A549 (cell line): ENCODE measurements at regions of chr15 and their contacts with region 1.

Region 1: DNA sequence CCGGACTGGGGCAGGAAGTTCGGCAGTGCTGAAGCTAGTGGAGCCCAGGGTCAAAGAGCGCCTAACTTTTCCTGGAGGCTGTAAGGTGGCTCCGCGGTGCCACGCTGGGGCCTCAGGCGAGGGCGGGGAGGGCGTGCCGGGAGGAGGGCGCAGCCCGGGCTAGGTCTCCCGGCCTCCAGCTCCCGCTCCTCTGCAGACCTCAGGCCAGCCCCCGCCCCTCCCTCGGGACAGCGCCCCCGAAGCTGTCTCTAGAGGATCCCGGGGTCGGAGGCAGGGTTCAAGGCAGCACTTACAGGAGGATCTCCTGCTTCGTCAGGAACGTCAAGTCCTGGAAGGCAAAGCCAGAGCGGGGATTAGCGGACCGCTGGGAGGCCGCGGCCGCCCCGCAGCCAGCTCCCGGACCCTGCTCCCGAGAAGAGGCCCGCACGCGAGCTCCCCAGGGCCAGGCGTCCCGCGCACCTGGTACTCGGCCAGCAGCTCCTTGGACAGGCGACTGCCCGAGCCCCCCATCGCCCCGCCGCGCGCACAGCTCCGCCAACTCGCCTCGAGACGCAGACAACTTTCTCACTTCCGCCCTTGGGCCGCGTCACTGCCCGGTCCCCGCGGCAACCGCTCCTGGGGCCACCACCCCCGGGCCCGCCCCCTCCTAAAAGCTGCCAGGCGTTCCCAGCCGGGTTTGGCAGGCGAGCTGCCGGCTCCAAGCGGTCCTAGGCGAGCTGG is at the start of gene CIB1:
- DNase-seq: peak; percentile 85 to 97
- ATAC-seq: peak; percentile 84 to 92
- H3K4me3 ChIP-seq: peak within 1 kb of the TSS; percentile 85
- H3K27ac ChIP-seq: peak within 1 kb of the TSS; percentile 86 to 90
- H3K4me1 ChIP-seq: peaks cover 26% of the 10 kb centered on the region
- CTCF ChIP-seq: no peak; the same call in none of the 3 replicates
- EP300 ChIP-seq: no peak
- POLR2A ChIP-seq: peak; percentile 44
- RAD21 ChIP-seq: no peak; a peak in 1 of 5 replicates
- polyA plus RNA-seq, gene CIB1: 84.1 and 130 TPM in 2 replicates

Region 2: DNA sequence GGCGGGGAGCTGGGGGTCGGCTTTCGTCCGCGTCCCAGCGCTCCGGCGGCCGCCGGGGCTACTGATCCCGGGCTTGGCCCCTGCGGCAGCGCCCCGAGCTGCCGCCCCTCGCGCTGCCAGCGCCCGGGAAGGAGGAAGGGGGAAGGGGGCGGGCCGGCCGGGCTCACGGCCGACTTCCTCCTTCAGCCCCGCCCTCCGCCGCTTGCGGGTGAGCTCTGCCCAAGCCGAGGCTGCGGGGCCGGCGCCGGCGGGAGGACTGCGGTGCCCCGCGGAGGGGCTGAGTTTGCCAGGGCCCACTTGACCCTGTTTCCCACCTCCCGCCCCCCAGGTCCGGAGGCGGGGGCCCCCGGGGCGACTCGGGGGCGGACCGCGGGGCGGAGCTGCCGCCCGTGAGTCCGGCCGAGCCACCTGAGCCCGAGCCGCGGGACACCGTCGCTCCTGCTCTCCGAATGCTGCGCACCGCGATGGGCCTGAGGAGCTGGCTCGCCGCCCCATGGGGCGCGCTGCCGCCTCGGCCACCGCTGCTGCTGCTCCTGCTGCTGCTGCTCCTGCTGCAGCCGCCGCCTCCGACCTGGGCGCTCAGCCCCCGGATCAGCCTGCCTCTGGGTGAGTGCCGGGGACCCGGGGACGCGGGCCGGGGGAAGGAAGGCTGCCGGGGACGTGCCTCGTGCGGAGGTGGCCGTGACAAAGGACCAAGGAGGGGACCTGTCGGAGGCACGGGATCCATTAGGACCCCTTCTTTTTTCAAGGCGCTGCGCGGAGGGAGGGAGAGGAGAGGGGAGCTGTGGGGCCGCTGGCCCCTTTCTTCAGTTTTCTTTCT is 32.2 kb before region 1 on chr15 and contains the start of gene SEMA4B:
- CTCF ChIA-PET with region 1: interaction called, 288 read pairs
- POLR2A ChIA-PET with region 1: interaction called, 12 read pairs
- DNase-seq: peak; percentile 61 to 92
- ATAC-seq: peak; percentile 88
- H3K4me3 ChIP-seq: peak within 1 kb of the TSS; percentile 80
- H3K27ac ChIP-seq: peak within 1 kb of the TSS; percentile 90 to 98
- H3K4me1 ChIP-seq: peaks cover 38% of the 10 kb centered on the region
- CTCF ChIP-seq: no peak
- EP300 ChIP-seq: no peak; a peak in 1 of 5 replicates
- POLR2A ChIP-seq: peak; percentile 73
- RAD21 ChIP-seq: no peak; a peak in 2 of 5 replicates
- polyA plus RNA-seq, gene SEMA4B: 45.3 and 61.0 TPM in 2 replicates

Region 3: DNA sequence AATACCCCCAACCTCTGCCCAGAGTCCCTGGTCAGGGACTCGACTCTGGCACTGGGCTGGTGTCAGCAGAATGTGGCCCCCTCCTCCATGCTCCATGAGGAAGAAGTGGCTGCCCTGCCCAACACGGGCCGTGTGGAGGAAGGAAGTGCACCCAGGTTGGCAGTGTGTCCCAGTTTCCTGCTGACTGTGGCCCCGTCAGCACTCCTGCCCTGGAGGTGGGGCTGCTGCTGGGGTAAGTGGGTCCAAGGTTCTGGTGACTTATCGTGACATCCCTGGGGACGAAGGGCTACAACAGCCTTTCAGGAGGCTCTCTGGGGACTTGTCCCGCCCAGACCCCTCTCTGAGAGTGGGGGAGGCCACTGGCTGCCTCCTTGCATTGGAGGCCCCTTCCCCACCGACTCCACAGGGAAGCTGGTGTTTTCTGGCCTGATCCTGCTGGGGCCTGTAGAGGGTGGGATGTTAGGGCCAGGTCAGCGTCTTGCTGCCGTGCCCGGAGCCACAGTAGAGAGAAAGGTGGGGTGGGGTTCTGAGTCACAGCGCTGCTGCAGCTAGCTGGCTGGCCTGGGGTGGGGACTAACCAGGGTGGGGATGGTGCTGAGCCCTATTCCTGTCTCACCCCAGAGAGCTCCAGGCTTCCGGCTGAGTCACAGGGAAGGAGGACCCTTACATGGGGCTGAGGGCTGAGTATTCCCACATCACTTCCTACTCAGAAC is 21.9 kb before region 1 on chr15:
- CTCF ChIA-PET with region 1: interaction called, 288 read pairs
- POLR2A ChIA-PET with region 1: interaction called, 11 read pairs
- DNase-seq: peak; percentile 88 to 96
- ATAC-seq: peak; percentile 90 to 92
- H3K4me3 ChIP-seq: peak overlapping the region; percentile 21; the same call in 1 of the 3 replicates
- H3K27ac ChIP-seq: peak overlapping the region; percentile 90 to 92
- H3K4me1 ChIP-seq: peaks cover 59% of the 10 kb centered on the region
- CTCF ChIP-seq: no peak
- EP300 ChIP-seq: no peak
- POLR2A ChIP-seq: peak; percentile 10; the same call in 1 of the 2 replicates
- RAD21 ChIP-seq: no peak

Region 4: GRCh38 chr15:90249203-90249863 is 15.8 kb after region 1 on chr15 and contains the start of gene TTLL13:
- CTCF ChIA-PET with region 1: interaction called, 17 read pairs
- POLR2A ChIA-PET with region 1: interaction called, 24 read pairs
- DNase-seq: peak; percentile 92 to 95
- ATAC-seq: peak; percentile 97 to 98
- H3K4me3 ChIP-seq: peak within 1 kb of the TSS; percentile 69
- H3K27ac ChIP-seq: peak within 1 kb of the TSS; percentile 83 to 86
- H3K4me1 ChIP-seq: peaks cover 12% of the 10 kb centered on the region
- CTCF ChIP-seq: no peak
- EP300 ChIP-seq: no peak
- POLR2A ChIP-seq: peak; percentile 93
- RAD21 ChIP-seq: no peak
- polyA plus RNA-seq, gene TTLL13: 0.56 and 0.61 TPM in 2 replicates

Region 5: DNA sequence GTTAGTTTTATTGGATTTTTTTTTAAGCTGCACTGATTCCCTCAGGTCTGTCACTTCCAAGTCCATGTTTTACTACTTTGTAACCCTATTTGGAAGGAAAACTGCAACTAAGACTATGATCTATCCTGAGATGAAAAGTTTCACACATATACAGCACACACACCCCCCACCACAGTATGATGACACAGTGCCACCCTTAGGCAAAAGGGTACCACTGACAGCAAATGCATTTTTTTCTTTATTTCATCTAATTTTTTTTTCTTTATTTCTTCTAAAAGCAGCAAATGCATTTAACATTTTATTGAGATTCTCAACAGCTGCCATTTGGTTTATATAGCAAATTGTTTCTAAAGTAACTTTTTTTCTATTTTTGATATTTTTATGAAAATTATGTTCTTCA is 53.1 kb after region 1 on chr15:
- CTCF ChIA-PET with region 1: interaction called, 10 read pairs
- POLR2A ChIA-PET with region 1: no interaction called
- DNase-seq: peak; percentile 55 to 67
- ATAC-seq: peak; percentile 83 to 90; a peak in 5 of 6 replicates
- H3K4me3 ChIP-seq: no peak overlapping the region
- H3K27ac ChIP-seq: no peak overlapping the region
- H3K4me1 ChIP-seq: no peaks in the 10 kb centered on the region
- CTCF ChIP-seq: peak; percentile 86
- EP300 ChIP-seq: no peak
- POLR2A ChIP-seq: no peak
- RAD21 ChIP-seq: peak; percentile 81 to 90

Region 6: GRCh38 chr15:90376789-90377188 is 143.3 kb after region 1 on chr15:
- CTCF ChIA-PET with region 1: no interaction called
- POLR2A ChIA-PET with region 1: no interaction called
- DNase-seq: no peak
- ATAC-seq: no peak
- H3K4me3 ChIP-seq: no peak overlapping the region
- H3K27ac ChIP-seq: no peak overlapping the region
- H3K4me1 ChIP-seq: peaks cover 3% of the 10 kb centered on the region; the same call in 1 of the 3 replicates
- CTCF ChIP-seq: no peak
- EP300 ChIP-seq: no peak
- POLR2A ChIP-seq: no peak
- RAD21 ChIP-seq: no peak